ENCODE measurements at regions of chr7 and their contacts with region 1.

Region 1: GRCh38 chr7:120583899-120584586 is 273.9 kb downstream of the TSPAN12 start:
- DNase-seq: no peak
- ATAC-seq: no peak
- H3K4me3 ChIP-seq: no peak overlapping the region
- H3K27ac ChIP-seq: no peak overlapping the region
- H3K4me1 ChIP-seq: no peaks in the 10 kb centered on the region
- H3K27me3 ChIP-seq: no peaks in the 10 kb centered on the region
- CTCF ChIP-seq: no peak

Region 2: GRCh38 chr7:119748991-119749390 is 835.1 kb before region 1 on chr7:
- CTCF ChIA-PET with region 1: no interaction called
- POLR2A ChIA-PET with region 1: no interaction called
- in situ Hi-C with region 1: no loop called
- intact Hi-C with region 1: no loop called
- DNase-seq: no peak
- ATAC-seq: no peak
- H3K4me3 ChIP-seq: no peak overlapping the region
- H3K27ac ChIP-seq: no peak overlapping the region
- H3K4me1 ChIP-seq: no peaks in the 10 kb centered on the region
- H3K27me3 ChIP-seq: no peaks in the 10 kb centered on the region
- CTCF ChIP-seq: no peak

Region 3: GRCh38 chr7:120603366-120603765 is 19.3 kb after region 1 on chr7:
- CTCF ChIA-PET with region 1: no interaction called
- POLR2A ChIA-PET with region 1: no interaction called
- in situ Hi-C with region 1: no loop called
- intact Hi-C with region 1: no loop called
- DNase-seq: no peak
- ATAC-seq: no peak
- H3K4me3 ChIP-seq: no peak overlapping the region
- H3K27ac ChIP-seq: no peak overlapping the region
- H3K4me1 ChIP-seq: no peaks in the 10 kb centered on the region
- H3K27me3 ChIP-seq: no peaks in the 10 kb centered on the region
- CTCF ChIP-seq: no peak

Region 4: GRCh38 chr7:120725376-120726039 is 141.5 kb after region 1 on chr7:
- CTCF ChIA-PET with region 1: no interaction called
- POLR2A ChIA-PET with region 1: no interaction called
- in situ Hi-C with region 1: no loop called
- intact Hi-C with region 1: loop called (anchors 10 kb)
- DNase-seq: no peak
- ATAC-seq: no peak
- H3K4me3 ChIP-seq: no peak overlapping the region
- H3K27ac ChIP-seq: no peak overlapping the region
- H3K4me1 ChIP-seq: no peaks in the 10 kb centered on the region
- H3K27me3 ChIP-seq: no peaks in the 10 kb centered on the region
- CTCF ChIP-seq: peak; percentile 70; the same call in 1 of the 2 replicates

Measured in Panc1 (cell line).